ENCODE measurements at regions of chr12 and their contacts with region 1.

Region 1: GRCh38 chr12:32455607-32456071 is 56.3 kb downstream of the FGD4 start:
- DNase-seq: no peak
- H3K4me3 Mint-ChIP-seq: no peak overlapping the region
- H3K27ac Mint-ChIP-seq: no peak overlapping the region
- H3K4me1 Mint-ChIP-seq: peaks cover 5% of the 10 kb centered on the region
- H3K27me3 Mint-ChIP-seq: peaks cover 11% of the 10 kb centered on the region

Region 2: GRCh38 chr12:32115404-32116104 is 340.1 kb before region 1 on chr12:
- intact Hi-C with region 1: no loop called
- DNase-seq: no peak
- H3K4me3 Mint-ChIP-seq: no peak overlapping the region
- H3K27ac Mint-ChIP-seq: no peak overlapping the region
- H3K4me1 Mint-ChIP-seq: peaks cover 12% of the 10 kb centered on the region
- H3K27me3 Mint-ChIP-seq: no peaks in the 10 kb centered on the region

Region 3: DNA sequence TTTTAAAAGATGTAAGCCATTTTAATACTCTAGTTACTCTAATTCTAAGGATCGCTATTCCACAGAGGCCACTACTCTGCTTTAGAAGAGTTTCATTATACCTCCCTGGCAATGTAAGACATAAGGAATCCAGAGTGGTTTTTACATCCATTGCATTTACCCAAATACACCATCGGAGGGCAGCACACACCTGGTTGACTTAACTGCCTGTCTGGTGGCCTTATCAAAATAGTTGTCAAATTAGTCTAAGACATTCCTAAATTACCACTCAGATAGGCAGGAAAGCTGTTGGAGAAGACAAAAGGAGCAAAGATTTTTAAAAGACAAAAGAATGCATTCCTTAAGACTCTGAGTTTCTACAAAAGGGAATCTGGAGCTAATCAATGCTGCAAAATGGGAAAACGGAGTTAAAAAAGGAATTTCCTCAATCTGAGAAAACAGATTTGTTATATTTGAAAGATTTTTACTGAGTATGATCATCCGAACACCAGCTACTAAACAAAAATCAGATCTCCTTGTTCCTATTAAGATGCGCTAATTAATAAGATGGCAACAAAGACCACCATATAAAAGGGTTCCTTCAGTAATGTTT is 90.1 kb before region 1 on chr12:
- intact Hi-C with region 1: loop called (anchors 5 kb)
- DNase-seq: peak; percentile 14
- H3K4me3 Mint-ChIP-seq: no peak overlapping the region
- H3K27ac Mint-ChIP-seq: no peak overlapping the region
- H3K4me1 Mint-ChIP-seq: no peaks in the 10 kb centered on the region
- H3K27me3 Mint-ChIP-seq: no peaks in the 10 kb centered on the region

Region 4: GRCh38 chr12:32671930-32672780 is 216.5 kb after region 1 on chr12:
- intact Hi-C with region 1: loop called (anchors 1 kb)
- DNase-seq: peak; percentile 5
- H3K4me3 Mint-ChIP-seq: no peak overlapping the region
- H3K27ac Mint-ChIP-seq: no peak overlapping the region
- H3K4me1 Mint-ChIP-seq: no peaks in the 10 kb centered on the region
- H3K27me3 Mint-ChIP-seq: peaks cover 2% of the 10 kb centered on the region